ENCODE measurements at regions of chr2 and their contacts with region 1.

Region 1: DNA sequence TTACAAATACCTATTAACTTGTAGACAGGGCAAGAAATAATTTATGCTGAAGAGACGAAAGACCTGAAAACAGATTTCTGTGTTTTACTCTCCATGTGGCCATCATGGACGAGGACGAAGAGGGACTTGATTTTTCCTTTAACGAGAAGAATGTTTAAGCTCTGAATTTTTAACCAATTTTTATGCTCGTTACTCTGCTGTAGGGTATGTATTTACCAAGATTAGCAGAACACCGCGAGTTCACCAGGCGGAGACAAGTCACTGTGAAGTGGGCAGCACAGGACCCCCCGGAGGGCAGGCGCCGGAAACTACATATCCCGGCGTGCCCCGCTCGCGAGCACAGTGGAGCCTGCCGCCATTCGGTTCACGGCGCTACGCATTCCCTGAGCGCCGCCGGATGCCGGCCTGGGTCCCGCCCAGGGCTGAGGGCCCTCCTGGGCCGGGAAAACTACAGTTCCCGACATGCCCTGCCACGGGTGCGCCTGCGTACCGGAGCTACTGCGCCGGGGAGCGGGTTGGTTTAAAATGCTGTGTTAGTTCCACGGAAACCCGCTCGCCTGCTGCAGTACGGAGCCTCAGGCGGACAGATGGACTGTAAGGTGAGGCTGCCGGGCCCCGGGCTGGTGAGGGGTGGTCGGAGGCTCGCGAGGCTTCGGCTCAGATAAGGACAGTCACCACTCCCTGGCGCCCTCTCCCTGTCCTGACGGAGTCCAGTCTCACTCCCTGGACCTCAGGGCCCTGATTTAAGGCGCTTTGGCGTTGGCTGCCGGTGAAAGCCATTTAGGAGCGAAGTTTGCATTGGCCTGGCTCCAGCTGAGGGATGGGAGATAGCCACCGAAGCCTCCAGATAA is at the start of gene CCDC150:
- DNase-seq: peak; percentile 97
- ATAC-seq: peak; percentile 100
- H3K4me3 Mint-ChIP-seq: peak within 1 kb of the TSS; percentile 93
- H3K27ac Mint-ChIP-seq: peak within 1 kb of the TSS; percentile 69
- H3K4me1 Mint-ChIP-seq: peaks cover 14% of the 10 kb centered on the region
- H3K27me3 Mint-ChIP-seq: peaks cover 2% of the 10 kb centered on the region
- total RNA-seq, gene CCDC150: 11.8 to 14.6 TPM

Region 2: GRCh38 chr2:196131384-196131937 is 507.9 kb before region 1 on chr2:
- CTCF ChIA-PET with region 1: no interaction called
- POLR2A ChIA-PET with region 1: no interaction called
- intact Hi-C with region 1: loop called in 1 of 2 experiments (anchors 5 kb)
- DNase-seq: peak; percentile 83
- ATAC-seq: peak; percentile 62
- H3K4me3 Mint-ChIP-seq: no peak overlapping the region
- H3K27ac Mint-ChIP-seq: peak overlapping the region; percentile 65
- H3K4me1 Mint-ChIP-seq: peaks cover 5% of the 10 kb centered on the region
- H3K27me3 Mint-ChIP-seq: no peaks in the 10 kb centered on the region

Region 3: DNA sequence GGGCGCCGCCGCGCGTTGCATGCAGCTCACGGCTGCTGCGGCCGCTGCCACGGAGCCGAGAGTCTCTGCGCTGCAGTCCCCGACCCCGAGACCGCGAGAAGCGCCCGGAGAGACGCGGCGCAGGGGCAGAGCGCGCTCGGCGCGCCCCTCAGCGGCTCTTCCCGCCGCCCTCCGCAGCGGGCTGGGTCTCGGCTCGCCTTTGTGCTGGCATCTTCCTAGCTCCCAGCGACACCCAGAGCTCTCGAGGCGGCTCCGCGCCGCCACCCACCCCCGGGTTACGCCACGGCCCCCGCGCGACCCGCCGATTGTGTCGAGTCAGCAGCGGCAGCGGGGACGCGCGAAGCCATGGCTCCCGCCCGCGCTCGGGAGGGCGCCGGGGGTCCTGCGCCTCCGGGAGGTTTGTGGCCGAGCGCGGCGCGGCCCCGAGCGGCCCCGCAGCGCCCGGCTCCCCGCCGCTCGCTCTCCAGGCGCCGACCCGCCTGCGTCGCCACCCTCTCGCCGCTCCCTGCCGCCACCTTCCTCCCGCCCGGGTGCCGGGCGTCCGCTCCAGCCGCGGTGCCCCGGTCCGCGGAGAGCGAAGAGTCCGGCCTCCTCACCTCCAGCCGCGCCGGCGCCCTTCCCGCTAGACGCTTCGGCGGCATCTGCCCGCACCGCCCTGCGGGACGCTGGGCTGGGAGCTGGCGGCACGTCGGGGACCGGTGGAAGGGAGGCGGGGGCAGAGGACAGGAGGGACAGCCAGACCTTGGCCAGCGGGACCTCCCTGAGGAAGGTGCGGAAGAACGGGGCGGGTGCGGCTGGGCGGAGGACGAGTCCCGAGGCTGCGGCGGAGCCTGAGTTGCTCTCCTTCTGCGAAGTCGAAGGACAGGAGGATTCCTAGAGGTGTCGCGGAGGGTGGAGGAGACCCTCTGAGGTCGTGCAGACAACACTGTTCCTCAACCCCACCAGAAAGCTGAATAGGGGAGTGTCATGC is 46.2 kb before region 1 on chr2:
- CTCF ChIA-PET with region 1: no interaction called
- POLR2A ChIA-PET with region 1: no interaction called
- intact Hi-C with region 1: loop called in 1 of 2 experiments (anchors 2 kb)
- DNase-seq: peak; percentile 46
- ATAC-seq: peak; percentile 61
- H3K4me3 Mint-ChIP-seq: peak within 1 kb of the TSS; percentile 63
- H3K27ac Mint-ChIP-seq: no peak within 1 kb of the TSS
- H3K4me1 Mint-ChIP-seq: peaks cover 7% of the 10 kb centered on the region
- H3K27me3 Mint-ChIP-seq: peaks cover 61% of the 10 kb centered on the region

Region 4: DNA sequence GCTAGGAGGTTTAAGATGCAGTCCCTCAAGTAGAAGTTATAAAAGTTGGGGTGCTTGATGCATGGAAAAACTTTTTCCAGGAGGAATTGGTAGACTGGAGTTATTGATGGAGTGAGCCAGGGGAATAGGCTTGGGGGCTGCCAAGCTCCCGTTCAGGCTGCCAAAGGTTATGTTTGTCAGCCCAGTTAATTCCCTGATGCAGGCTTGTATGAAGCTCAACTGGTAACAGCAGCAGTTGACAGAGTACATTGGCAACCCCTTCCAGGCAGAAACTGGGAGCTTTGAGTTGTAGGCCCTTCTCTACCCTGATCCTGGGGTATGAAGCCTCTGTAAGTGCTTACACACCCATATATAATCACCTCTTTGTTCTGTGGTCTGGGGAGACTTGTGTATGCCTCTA is 16.4 kb after region 1 on chr2:
- CTCF ChIA-PET with region 1: no interaction called
- POLR2A ChIA-PET with region 1: no interaction called
- intact Hi-C with region 1: no loop called
- DNase-seq: no peak
- ATAC-seq: no peak
- H3K4me3 Mint-ChIP-seq: no peak overlapping the region
- H3K27ac Mint-ChIP-seq: no peak overlapping the region
- H3K4me1 Mint-ChIP-seq: no peaks in the 10 kb centered on the region
- H3K27me3 Mint-ChIP-seq: no peaks in the 10 kb centered on the region

Region 5: DNA sequence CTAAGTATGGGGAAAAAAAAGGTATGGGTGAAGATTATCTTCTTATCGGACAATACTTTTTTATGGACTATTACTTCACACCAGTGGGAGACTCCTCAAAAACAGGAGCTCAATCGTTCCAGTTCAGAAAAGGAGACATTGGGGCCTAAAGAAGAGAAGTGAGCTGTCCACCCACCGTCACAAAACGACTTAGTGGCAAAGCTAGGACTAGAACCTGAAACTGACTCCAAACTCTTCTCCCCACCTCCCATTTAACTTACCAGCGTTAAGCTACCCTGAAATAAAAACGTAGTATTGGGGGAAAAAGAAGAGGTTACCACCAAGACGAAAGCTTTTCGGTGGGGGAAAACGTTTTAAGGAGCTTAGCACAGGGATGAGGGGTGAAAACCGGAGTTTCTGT is 159.6 kb after region 1 on chr2:
- CTCF ChIA-PET with region 1: no interaction called
- POLR2A ChIA-PET with region 1: no interaction called
- intact Hi-C with region 1: loop called in 1 of 2 experiments (anchors 1 kb)
- DNase-seq: no peak
- ATAC-seq: peak; percentile 5
- H3K4me3 Mint-ChIP-seq: peak overlapping the region; percentile 85
- H3K27ac Mint-ChIP-seq: peak overlapping the region; percentile 97
- H3K4me1 Mint-ChIP-seq: peaks cover 38% of the 10 kb centered on the region
- H3K27me3 Mint-ChIP-seq: peaks cover 2% of the 10 kb centered on the region

Region 6: GRCh38 chr2:197113275-197113711 is 473.9 kb after region 1 on chr2:
- CTCF ChIA-PET with region 1: no interaction called
- POLR2A ChIA-PET with region 1: no interaction called
- intact Hi-C with region 1: no loop called
- DNase-seq: no peak
- ATAC-seq: peak; percentile 41
- H3K4me3 Mint-ChIP-seq: no peak overlapping the region
- H3K27ac Mint-ChIP-seq: peak overlapping the region; percentile 26
- H3K4me1 Mint-ChIP-seq: peaks cover 25% of the 10 kb centered on the region
- H3K27me3 Mint-ChIP-seq: no peaks in the 10 kb centered on the region

Region 7: GRCh38 chr2:197434541-197435513 is 795.4 kb after region 1 on chr2 and contains the start of gene SF3B1:
- CTCF ChIA-PET with region 1: no interaction called
- POLR2A ChIA-PET with region 1: no interaction called
- intact Hi-C with region 1: loop called in 1 of 2 experiments (anchors 2 kb)
- DNase-seq: peak; percentile 100
- ATAC-seq: peak; percentile 94
- H3K4me3 Mint-ChIP-seq: peak within 1 kb of the TSS; percentile 98
- H3K27ac Mint-ChIP-seq: peak within 1 kb of the TSS; percentile 99
- H3K4me1 Mint-ChIP-seq: peaks cover 44% of the 10 kb centered on the region
- H3K27me3 Mint-ChIP-seq: no peaks in the 10 kb centered on the region
- total RNA-seq, gene SF3B1: 262 to 277 TPM

Region 8: GRCh38 chr2:197453161-197453914 is 813.9 kb after region 1 on chr2 and contains the start of gene COQ10B:
- CTCF ChIA-PET with region 1: no interaction called
- POLR2A ChIA-PET with region 1: no interaction called
- intact Hi-C with region 1: loop called in 1 of 2 experiments (anchors 1 kb)
- DNase-seq: peak; percentile 99
- ATAC-seq: peak; percentile 93
- H3K4me3 Mint-ChIP-seq: peak within 1 kb of the TSS; percentile 90
- H3K27ac Mint-ChIP-seq: peak within 1 kb of the TSS; percentile 96
- H3K4me1 Mint-ChIP-seq: peaks cover 42% of the 10 kb centered on the region
- H3K27me3 Mint-ChIP-seq: no peaks in the 10 kb centered on the region
- total RNA-seq, gene COQ10B: 9.7 to 13.3 TPM

Measured in activated CD4-positive, alpha-beta T cell treated with anti-CD3 and anti-CD28 coated beads for 36 hours (primary cell).